Activated CD8-positive, alpha-beta T cell treated with anti-CD3 and anti-CD28 coated beads for 36 hours (primary cell): ENCODE measurements at regions of chr11 and their contacts with region 1.

Region 1: GRCh38 chr11:554824-555472 is 5.6 kb downstream of the LMNTD2 start:
- DNase-seq: peak; percentile 79
- ATAC-seq: peak; percentile 86
- H3K4me3 Mint-ChIP-seq: peak overlapping the region; percentile 10
- H3K27ac Mint-ChIP-seq: no peak overlapping the region
- H3K4me1 Mint-ChIP-seq: peaks cover 5% of the 10 kb centered on the region
- H3K27me3 Mint-ChIP-seq: peaks cover 2% of the 10 kb centered on the region
- CTCF ChIP-seq: peak; percentile 49

Region 2: GRCh38 chr11:269146-269890 is 285.6 kb before region 1 on chr11:
- CTCF ChIA-PET with region 1: no interaction called
- POLR2A ChIA-PET with region 1: no interaction called
- intact Hi-C with region 1: no loop called
- DNase-seq: peak; percentile 72
- ATAC-seq: peak; percentile 38
- H3K4me3 Mint-ChIP-seq: peak overlapping the region; percentile 89
- H3K27ac Mint-ChIP-seq: peak overlapping the region; percentile 98
- H3K4me1 Mint-ChIP-seq: peaks cover 37% of the 10 kb centered on the region
- H3K27me3 Mint-ChIP-seq: no peaks in the 10 kb centered on the region
- CTCF ChIP-seq: peak; percentile 46

Region 3: DNA sequence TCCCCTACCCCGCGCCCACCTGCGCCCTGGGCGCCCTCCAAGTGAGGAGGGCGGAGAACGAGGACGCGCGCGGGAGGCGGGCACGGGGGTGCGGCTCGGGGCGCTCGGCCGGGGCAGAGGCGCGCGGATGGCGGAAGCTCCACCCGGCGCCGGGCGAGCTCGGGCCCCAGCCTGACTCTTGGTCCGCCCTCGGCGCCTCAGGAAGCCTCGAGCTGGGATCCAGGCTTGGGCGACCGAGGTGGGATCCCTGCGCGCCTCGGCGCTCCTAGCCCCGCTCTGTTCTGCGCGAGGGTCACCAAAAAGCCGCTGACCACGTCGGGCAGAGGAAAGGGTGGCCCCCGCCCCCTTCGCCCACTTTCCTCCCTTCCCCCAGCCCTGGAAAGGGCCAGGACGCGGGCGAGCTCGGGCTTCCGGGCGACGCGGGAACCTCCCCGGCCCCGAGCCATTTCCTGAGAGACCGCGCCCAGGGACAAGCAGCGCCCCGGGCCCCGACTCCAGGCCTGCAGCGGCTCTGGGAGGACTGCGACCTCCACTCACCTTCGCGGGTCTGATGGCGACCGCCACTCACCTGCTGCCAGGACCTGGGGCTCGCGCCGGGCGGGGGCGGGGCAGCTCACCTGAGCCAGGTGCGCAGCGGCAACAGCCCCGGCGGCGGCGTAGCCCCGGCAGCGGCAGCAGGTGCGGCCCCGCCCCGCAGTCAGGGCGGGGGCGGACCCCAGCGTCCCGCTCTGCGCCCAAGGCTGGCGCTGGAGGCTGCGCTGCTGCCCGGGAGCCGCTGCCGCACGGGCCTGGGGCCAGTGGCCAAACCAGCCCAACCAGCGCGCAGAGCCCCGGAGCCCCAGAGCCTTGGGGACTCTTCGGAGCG is 138.0 kb before region 1 on chr11:
- CTCF ChIA-PET with region 1: no interaction called
- POLR2A ChIA-PET with region 1: no interaction called
- intact Hi-C with region 1: no loop called
- DNase-seq: peak; percentile 56
- ATAC-seq: peak; percentile 31
- H3K4me3 Mint-ChIP-seq: peak overlapping the region; percentile 77
- H3K27ac Mint-ChIP-seq: no peak overlapping the region
- H3K4me1 Mint-ChIP-seq: peaks cover 24% of the 10 kb centered on the region
- H3K27me3 Mint-ChIP-seq: no peaks in the 10 kb centered on the region
- CTCF ChIP-seq: no peak

Region 4: GRCh38 chr11:565921-566509 is 11.1 kb after region 1 on chr11:
- CTCF ChIA-PET with region 1: interaction called, 14 read pairs
- POLR2A ChIA-PET with region 1: interaction called, 3 read pairs
- intact Hi-C with region 1: no loop called
- DNase-seq: no peak
- ATAC-seq: no peak
- H3K4me3 Mint-ChIP-seq: peak overlapping the region; percentile 88
- H3K27ac Mint-ChIP-seq: no peak overlapping the region
- H3K4me1 Mint-ChIP-seq: peaks cover 4% of the 10 kb centered on the region
- H3K27me3 Mint-ChIP-seq: no peaks in the 10 kb centered on the region
- CTCF ChIP-seq: peak; percentile 15

Region 5: GRCh38 chr11:587978-588380 is 33.0 kb after region 1 on chr11:
- CTCF ChIA-PET with region 1: interaction called, 11 read pairs
- POLR2A ChIA-PET with region 1: interaction called, 6 read pairs
- intact Hi-C with region 1: no loop called
- DNase-seq: peak; percentile 86
- ATAC-seq: peak; percentile 99
- H3K4me3 Mint-ChIP-seq: peak overlapping the region; percentile 67
- H3K27ac Mint-ChIP-seq: peak overlapping the region; percentile 99
- H3K4me1 Mint-ChIP-seq: peaks cover 30% of the 10 kb centered on the region
- H3K27me3 Mint-ChIP-seq: no peaks in the 10 kb centered on the region
- CTCF ChIP-seq: no peak

Region 6: GRCh38 chr11:737371-737770 is 182.4 kb after region 1 on chr11:
- CTCF ChIA-PET with region 1: no interaction called
- POLR2A ChIA-PET with region 1: no interaction called
- intact Hi-C with region 1: no loop called
- DNase-seq: no peak
- ATAC-seq: peak; percentile 45
- H3K4me3 Mint-ChIP-seq: peak overlapping the region; percentile 24
- H3K27ac Mint-ChIP-seq: no peak overlapping the region
- H3K4me1 Mint-ChIP-seq: peaks cover 13% of the 10 kb centered on the region
- H3K27me3 Mint-ChIP-seq: peaks cover 2% of the 10 kb centered on the region
- CTCF ChIP-seq: no peak

Region 7: DNA sequence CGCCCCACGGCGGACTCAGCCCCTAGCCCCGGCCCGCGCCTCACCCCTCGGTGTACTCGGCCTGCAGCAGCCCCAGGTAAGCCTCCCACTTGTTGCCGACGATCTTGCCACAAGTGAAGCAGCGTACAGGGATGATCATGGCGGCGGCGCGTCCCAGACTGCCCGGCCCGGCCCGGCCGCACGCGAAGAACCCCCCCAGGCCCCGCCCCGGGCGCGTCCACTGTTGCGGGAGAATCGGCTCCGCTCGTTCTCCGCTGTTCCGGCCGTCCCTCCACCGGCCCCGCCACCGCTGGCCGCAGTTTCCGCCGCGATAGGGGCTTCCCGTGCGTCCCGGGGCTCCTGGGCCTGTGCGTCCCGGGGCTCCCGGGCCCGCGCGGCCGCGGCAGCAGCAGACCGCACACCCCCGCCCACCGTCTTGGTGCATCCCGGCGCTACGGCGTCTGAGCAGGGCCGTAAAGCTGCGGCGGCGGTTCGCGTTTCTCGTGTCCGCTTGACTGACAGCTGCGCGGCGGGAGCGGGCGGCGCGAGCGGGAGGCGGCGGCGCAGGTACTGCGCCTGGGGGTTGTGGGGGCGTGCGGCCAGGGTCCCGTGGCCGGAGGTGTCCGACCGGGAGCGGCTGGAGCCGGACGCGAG is 287.5 kb after region 1 on chr11 and contains the starts of genes POLR2L and TSPAN4:
- CTCF ChIA-PET with region 1: no interaction called
- POLR2A ChIA-PET with region 1: no interaction called
- intact Hi-C with region 1: no loop called
- DNase-seq: peak; percentile 92
- ATAC-seq: peak; percentile 79
- H3K4me3 Mint-ChIP-seq: peak within 1 kb of the TSS; percentile 85
- H3K27ac Mint-ChIP-seq: peak within 1 kb of the TSS; percentile 87
- H3K4me1 Mint-ChIP-seq: peaks cover 33% of the 10 kb centered on the region
- H3K27me3 Mint-ChIP-seq: peaks cover 2% of the 10 kb centered on the region
- CTCF ChIP-seq: no peak
- total RNA-seq, gene POLR2L: 83.0 to 89.2 TPM
- total RNA-seq, gene TSPAN4: 15.4 to 16.0 TPM